Activated CD8-positive, alpha-beta T cell treated with anti-CD3 and anti-CD28 coated beads, Interleukin-2, amount 10 ng/mL, durations not matched to agents 7 days and 5 days (primary cell): ENCODE measurements at regions of chr7 and their contacts with region 1.

Region 1: GRCh38 chr7:29113384-29114103 is 32.8 kb downstream of the CPVL start:
- DNase-seq: no peak
- ATAC-seq: no peak
- H3K4me3 Mint-ChIP-seq: no peak overlapping the region
- H3K27ac Mint-ChIP-seq: no peak overlapping the region
- H3K4me1 Mint-ChIP-seq: peaks cover 11% of the 10 kb centered on the region
- H3K27me3 Mint-ChIP-seq: peaks cover 32% of the 10 kb centered on the region

Region 2: DNA sequence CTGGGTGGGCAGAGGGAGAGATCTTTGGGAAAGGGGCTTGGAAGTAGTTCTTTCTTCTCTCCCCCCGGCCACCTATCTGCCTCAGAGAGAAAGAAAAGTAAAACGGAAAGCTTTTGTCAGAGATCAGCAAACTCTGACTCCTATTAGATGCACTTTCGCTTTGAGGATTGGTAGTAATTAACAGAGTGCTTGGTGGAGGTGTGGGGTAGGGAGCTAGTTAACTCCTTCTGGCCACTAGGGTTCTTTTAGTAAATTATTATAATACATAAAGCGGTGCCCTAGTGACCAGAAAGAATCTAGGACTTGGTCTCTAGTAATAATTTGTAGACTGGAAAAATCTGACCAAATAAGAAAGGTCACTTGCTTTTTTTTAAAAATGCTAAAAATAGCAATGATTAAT is 21.8 kb before region 1 on chr7:
- CTCF ChIA-PET with region 1: no interaction called
- POLR2A ChIA-PET with region 1: no interaction called
- DNase-seq: no peak
- ATAC-seq: peak; percentile 73
- H3K4me3 Mint-ChIP-seq: peak overlapping the region; percentile 69
- H3K27ac Mint-ChIP-seq: peak overlapping the region; percentile 74
- H3K4me1 Mint-ChIP-seq: peaks cover 21% of the 10 kb centered on the region
- H3K27me3 Mint-ChIP-seq: peaks cover 4% of the 10 kb centered on the region

Region 3: DNA sequence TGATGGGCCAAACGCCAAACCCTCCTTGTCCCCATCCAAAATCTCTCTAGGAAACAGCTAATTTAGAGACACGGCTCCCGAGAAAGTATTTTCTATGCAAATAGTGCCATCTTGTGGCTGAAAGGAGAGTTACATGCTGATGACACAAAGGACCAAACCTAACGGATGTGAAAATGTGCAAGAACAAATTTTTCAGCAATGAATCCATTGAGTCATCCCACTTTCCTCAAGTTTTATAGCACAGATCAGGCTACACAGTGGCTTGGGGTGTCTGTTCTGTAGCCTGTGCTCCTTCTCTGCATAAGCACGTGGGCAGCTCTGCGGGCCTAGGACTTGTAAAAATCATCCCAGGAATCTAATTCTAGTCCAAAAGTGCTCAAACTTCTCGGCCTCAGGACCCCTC is 295.3 kb after region 1 on chr7:
- CTCF ChIA-PET with region 1: interaction called, 10 read pairs
- POLR2A ChIA-PET with region 1: no interaction called
- DNase-seq: peak; percentile 71
- ATAC-seq: peak; percentile 58
- H3K4me3 Mint-ChIP-seq: no peak overlapping the region
- H3K27ac Mint-ChIP-seq: no peak overlapping the region
- H3K4me1 Mint-ChIP-seq: no peaks in the 10 kb centered on the region
- H3K27me3 Mint-ChIP-seq: no peaks in the 10 kb centered on the region